Posterior vena cava (tissue), 2 donors: ENCODE measurements at regions of chr12 and their contacts with region 1.

Region 1: DNA sequence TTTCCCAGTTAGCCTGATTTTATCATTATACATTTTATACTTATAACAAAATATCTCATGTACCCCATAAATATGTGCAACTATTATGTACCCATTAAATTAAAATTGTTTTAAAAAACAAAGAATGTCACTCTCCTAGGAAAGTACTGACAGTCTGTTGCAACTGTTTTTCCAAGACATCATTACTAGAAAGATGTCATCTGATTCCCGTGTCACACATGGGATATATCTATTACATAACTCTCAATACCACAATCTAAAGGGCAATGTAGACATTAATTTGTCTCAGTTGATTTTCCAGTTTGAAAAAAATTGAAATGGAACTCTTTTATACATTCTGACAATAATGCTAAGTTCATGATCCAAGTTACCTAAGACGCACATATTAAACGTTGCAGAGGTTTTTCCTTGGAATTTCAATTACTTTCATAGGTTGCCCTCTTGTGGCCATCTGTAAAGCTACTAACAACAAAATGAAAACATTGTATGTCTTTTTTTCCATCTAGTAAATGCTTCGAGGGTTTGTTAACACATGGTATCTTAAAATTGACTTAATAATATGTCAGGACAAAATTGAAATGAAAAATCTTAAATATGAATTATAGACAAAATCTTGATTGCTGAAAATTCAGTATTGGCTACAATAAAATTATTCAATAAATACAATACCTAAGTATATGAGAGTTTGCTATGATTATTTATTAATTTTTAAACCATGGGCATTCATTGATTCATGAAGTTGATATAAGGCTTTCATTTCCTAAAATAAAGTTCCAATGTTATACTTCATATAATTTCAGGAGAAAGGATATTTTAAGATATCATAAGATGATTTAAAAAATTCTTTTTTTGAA is 131.6 kb downstream of the PPFIA2 start:
- DNase-seq: no peak

Region 2: GRCh38 chr12:81300454-81300853 is 327.1 kb before region 1 on chr12:
- intact Hi-C with region 1: loop called in 1 of 2 experiments (anchors 5 kb)
- DNase-seq: no peak

Region 3: GRCh38 chr12:81440001-81440400 is 187.6 kb before region 1 on chr12:
- intact Hi-C with region 1: loop called in 1 of 2 experiments (anchors 10 kb)
- DNase-seq: no peak

Region 4: GRCh38 chr12:81468206-81468605 is 159.4 kb before region 1 on chr12:
- intact Hi-C with region 1: loop called in 1 of 2 experiments (anchors 10 kb)
- DNase-seq: no peak